PC-9 (cell line): ENCODE measurements at regions of chr10 and their contacts with region 1.

Region 1: GRCh38 chr10:31031558-31032257 is at the start of gene ZNF438:
- DNase-seq: peak; percentile 72 to 95
- H3K4me3 ChIP-seq: peak within 1 kb of the TSS; percentile 70
- H3K27ac ChIP-seq: peak within 1 kb of the TSS; percentile 93
- H3K4me1 ChIP-seq: peaks cover 24% of the 10 kb centered on the region
- H3K27me3 ChIP-seq: no peaks in the 10 kb centered on the region
- CTCF ChIP-seq: peak; percentile 66
- total RNA-seq, gene ZNF438: 4.6 and 4.7 TPM in 2 replicates

Region 2: GRCh38 chr10:30671026-30671616 is 360.6 kb before region 1 on chr10:
- CTCF ChIA-PET with region 1: no interaction called
- POLR2A ChIA-PET with region 1: no interaction called
- intact Hi-C with region 1: no loop called
- DNase-seq: peak; percentile 33 to 39
- H3K4me3 ChIP-seq: peak overlapping the region; percentile 26; the same call in 1 of the 2 replicates
- H3K27ac ChIP-seq: no peak overlapping the region
- H3K4me1 ChIP-seq: no peaks in the 10 kb centered on the region
- H3K27me3 ChIP-seq: no peaks in the 10 kb centered on the region
- CTCF ChIP-seq: peak; percentile 80

Region 3: DNA sequence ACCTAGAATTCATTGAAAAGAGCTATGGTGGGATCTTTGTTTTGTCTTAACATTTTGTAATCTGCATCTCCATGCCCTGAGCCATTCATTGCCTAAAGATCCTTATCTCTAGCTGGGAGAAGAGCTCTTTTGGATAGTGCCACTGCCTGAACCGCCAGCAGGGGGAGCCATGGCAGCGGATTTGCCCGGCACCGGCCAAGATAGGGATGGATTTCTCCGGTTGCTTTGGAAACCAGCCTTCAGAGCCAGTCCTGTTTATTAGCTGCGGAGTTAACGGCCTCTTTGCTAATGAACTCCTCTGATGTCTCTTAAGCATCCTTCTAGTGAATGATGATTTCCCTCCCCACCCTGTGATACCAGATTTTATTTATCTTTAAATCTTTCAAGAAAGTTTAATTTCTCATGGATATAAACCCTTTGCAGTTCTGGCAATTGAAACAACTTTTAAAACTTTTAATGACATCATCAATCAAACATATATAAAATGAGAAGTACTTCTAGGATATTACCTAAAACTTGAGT is 343.9 kb before region 1 on chr10:
- CTCF ChIA-PET with region 1: no interaction called
- POLR2A ChIA-PET with region 1: no interaction called
- intact Hi-C with region 1: loop called (anchors 2 kb)
- DNase-seq: peak; percentile 38 to 80
- H3K4me3 ChIP-seq: no peak overlapping the region
- H3K27ac ChIP-seq: no peak overlapping the region
- H3K4me1 ChIP-seq: no peaks in the 10 kb centered on the region
- H3K27me3 ChIP-seq: no peaks in the 10 kb centered on the region
- CTCF ChIP-seq: peak; percentile 90

Region 4: DNA sequence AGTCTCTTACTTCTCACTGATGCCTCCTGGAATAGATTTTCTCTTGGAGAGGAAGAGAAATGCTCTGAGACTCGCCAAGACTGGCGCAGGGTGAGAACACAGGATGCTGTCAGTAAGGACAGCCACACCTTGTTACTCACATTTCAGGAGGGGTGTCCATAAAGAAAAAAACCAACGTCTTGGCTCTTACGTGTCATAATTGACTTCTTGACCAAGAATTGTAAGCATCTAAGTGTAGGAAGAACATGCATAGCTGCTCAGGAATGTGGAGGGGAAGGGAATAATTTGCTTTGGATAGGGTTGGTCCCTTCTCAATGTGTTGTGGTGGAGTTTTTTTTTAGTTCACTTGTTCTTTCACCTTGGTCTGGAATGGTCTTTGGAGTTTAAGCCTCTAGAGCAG is 43.7 kb after region 1 on chr10:
- CTCF ChIA-PET with region 1: no interaction called
- POLR2A ChIA-PET with region 1: no interaction called
- intact Hi-C with region 1: loop called (anchors 2 kb)
- DNase-seq: peak; percentile 45 to 85
- H3K4me3 ChIP-seq: no peak overlapping the region
- H3K27ac ChIP-seq: 0 out of 2 replicates have a peak overlapping the region, but pooled peaks have one; percentile 30
- H3K4me1 ChIP-seq: peaks cover 30% of the 10 kb centered on the region
- H3K27me3 ChIP-seq: no peaks in the 10 kb centered on the region
- CTCF ChIP-seq: no peak

Region 5: GRCh38 chr10:31146491-31147209 is 114.9 kb after region 1 on chr10:
- CTCF ChIA-PET with region 1: no interaction called
- POLR2A ChIA-PET with region 1: no interaction called
- intact Hi-C with region 1: loop called (anchors 5 kb)
- DNase-seq: peak; percentile 52 to 75
- H3K4me3 ChIP-seq: no peak overlapping the region
- H3K27ac ChIP-seq: peak overlapping the region; percentile 62
- H3K4me1 ChIP-seq: peaks cover 16% of the 10 kb centered on the region
- H3K27me3 ChIP-seq: no peaks in the 10 kb centered on the region
- CTCF ChIP-seq: no peak

Region 6: GRCh38 chr10:31467796-31468535 is 436.3 kb after region 1 on chr10:
- CTCF ChIA-PET with region 1: interaction called, 3 read pairs
- POLR2A ChIA-PET with region 1: no interaction called
- intact Hi-C with region 1: loop called (anchors 10 kb)
- DNase-seq: peak; percentile 36 to 51
- H3K4me3 ChIP-seq: no peak overlapping the region
- H3K27ac ChIP-seq: no peak overlapping the region
- H3K4me1 ChIP-seq: no peaks in the 10 kb centered on the region
- H3K27me3 ChIP-seq: no peaks in the 10 kb centered on the region
- CTCF ChIP-seq: peak; percentile 75

Region 7: GRCh38 chr10:31759799-31760626 is 728.3 kb after region 1 on chr10:
- CTCF ChIA-PET with region 1: no interaction called
- POLR2A ChIA-PET with region 1: no interaction called
- intact Hi-C with region 1: loop called (anchors 1 kb)
- DNase-seq: peak; percentile 85 to 95
- H3K4me3 ChIP-seq: peak overlapping the region; percentile 84
- H3K27ac ChIP-seq: peak overlapping the region; percentile 75
- H3K4me1 ChIP-seq: peaks cover 7% of the 10 kb centered on the region; the same call in 1 of the 2 replicates
- H3K27me3 ChIP-seq: no peaks in the 10 kb centered on the region
- CTCF ChIP-seq: no peak